AG04449 (cell line): ENCODE measurements at regions of chr1 and their contacts with region 1.

Region 1: DNA sequence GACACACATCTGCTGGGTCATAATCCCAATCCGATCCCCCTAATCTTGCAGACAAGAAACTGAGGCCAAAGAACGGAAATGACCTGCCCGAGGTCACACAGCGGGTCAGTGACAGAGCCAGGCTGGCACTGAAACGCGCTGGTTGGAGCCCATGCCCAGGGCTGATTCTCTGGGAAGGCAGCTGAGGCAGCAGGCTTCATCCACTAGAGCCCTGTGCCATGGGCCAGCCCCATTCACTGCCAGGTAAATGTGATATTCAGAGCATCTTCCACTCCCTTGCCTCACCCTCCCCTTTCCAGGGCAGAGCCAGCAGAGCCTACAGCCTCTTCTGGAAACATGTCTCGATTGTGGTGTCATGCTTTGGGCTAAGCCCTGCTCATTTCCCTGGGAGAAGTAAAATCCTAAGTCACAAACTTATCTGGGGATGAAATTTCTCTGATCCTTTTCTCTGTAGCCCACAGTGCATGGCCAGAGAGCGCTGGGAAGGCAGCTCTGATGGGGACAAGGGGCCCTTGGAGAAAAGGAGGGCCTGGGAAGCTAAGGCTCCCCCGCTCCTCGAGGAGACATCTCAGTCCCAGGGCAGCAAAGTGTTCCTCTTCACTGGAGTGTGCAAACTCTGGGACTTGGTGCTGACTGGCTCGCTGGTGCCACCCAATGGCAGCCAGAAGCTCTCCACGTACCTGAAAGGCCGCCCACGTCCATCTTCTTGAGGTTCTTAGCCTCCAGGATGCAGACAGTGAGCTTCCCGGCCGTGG is 110.4 kb downstream of the SYT2 start:
- DNase-seq: no peak
- H3K4me3 ChIP-seq: no peak overlapping the region
- CTCF ChIP-seq: peak; percentile 95

Region 2: DNA sequence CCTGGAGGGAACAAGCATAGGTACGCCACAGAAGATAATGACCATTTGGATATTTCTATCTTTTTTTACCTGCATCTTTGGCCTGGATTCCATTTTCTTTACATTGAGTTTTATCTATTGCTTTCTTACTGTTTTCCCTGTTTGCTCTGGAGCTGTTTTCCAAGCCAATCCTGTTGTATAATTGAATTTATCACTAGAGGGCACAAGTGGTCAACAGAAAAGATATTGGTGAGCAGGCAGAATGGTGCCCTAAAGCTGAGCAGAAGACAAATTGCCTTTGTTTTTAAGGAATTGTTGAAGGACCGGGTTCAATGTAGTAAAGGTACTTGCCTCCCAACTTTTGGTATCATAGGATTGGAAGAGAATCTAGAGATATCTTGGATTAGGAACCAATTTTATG is 98.6 kb before region 1 on chr1:
- CTCF ChIA-PET with region 1: interaction called, 150 read pairs
- POLR2A ChIA-PET with region 1: no interaction called
- DNase-seq: no peak
- H3K4me3 ChIP-seq: no peak overlapping the region
- CTCF ChIP-seq: peak; percentile 10

Region 3: GRCh38 chr1:202571347-202572339 is 28.2 kb before region 1 on chr1:
- CTCF ChIA-PET with region 1: interaction called, 58 read pairs
- POLR2A ChIA-PET with region 1: no interaction called
- DNase-seq: no peak
- H3K4me3 ChIP-seq: no peak overlapping the region
- CTCF ChIP-seq: peak; percentile 77

Region 4: DNA sequence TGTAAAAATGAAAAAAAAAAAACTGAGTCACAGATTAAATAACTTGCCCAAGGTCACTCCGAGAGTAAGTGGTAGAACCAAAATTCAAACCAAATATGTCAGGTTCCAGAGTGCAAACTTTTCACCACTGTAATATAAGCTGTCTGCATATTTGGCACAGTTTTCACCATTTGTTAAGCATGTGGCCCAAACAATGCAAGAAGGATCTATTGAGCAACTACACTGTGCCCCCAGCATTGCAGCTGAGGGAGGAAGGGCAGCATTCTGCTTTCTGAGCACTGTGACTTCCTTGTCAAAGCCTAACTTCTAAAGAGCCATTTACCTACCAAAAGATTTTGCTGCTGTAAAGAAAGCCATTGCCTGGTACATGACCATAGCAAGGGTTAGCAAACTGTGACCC is 23.0 kb before region 1 on chr1:
- CTCF ChIA-PET with region 1: interaction called, 58 read pairs
- POLR2A ChIA-PET with region 1: no interaction called
- DNase-seq: no peak
- H3K4me3 ChIP-seq: no peak overlapping the region
- CTCF ChIP-seq: no peak

Region 5: DNA sequence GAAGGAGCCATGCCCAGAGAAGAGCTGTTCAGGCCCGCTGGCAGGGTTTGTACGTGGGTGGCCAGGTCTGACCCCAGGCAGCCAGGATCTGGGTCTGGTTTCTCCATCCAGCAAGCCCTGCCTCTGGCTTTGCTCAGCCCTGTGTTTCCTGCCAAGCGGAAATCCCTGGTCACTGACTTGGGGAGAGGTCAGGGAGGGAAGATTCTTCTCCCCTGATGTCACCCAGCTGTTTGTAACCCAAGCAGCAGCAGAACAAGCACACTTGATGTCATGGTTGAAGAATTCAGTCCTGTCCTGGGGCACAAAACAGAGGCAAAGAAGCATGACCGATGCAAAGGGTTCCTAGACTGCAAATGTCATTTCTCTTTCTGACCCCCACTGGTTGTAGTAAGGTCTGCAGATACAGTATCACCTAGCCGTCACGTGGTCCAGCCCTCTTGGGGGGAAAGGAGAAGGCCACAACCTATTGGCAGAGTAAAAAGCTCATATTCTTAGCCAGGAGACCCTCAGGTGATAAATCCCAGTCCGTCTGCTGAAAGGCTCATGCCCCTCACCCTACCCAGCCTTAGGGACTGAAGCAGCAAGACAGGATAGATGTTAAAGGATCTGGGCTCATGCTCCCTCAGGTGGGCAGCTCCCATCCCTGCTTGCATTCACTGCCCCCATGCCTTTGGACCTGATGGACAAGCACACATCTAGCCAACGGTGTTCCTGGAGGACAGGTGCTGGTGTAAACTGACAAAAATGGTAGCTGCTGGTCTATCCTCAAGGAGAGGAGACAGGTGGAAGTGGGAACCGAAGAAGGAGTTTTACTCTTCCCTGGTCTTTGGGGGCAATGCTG is 10.4 kb before region 1 on chr1:
- CTCF ChIA-PET with region 1: interaction called, 82 read pairs
- POLR2A ChIA-PET with region 1: no interaction called
- DNase-seq: peak; percentile 97
- H3K4me3 ChIP-seq: no peak overlapping the region
- CTCF ChIP-seq: no peak

Region 6: DNA sequence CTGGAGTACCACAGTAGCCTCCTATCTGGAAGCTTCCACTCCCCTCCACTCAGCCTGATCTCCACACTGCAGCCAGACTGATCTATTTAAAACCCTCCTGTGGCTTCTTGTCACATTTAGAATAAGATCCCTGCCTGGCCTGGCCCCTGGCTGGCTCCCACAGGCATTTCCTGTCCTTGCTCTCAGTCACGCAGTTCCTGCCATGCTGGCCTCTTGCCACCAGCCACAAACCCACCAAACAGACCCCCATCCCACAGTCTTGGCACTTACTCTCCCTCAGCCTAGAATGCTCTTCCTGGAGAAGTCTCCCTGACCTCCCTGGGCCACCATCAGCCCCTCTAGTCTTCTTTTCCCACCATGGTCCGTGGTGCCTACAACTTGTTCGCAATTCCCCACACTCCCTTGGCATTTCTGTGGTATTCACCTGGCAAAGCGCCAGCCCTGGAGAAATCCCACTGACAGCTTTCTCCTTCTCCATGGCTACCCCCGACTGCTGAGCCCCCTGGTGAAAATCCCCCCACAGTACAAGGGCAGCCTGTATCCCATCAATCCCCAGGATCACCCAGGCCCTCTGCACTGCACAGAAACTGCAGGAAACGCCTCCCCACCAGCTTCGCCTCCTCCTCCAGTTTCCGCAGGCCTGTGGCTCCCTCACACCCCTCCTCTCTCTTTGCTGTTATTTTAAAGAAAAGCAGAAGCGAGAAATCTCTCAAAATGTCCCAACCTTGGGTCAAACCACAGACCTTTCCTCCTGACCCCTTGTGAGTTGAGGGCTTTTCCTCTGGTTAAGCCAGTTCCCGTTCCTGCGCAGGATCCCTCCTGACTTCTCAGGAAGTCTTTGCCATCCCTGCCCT is 15.9 kb after region 1 on chr1:
- CTCF ChIA-PET with region 1: interaction called, 72 read pairs
- POLR2A ChIA-PET with region 1: no interaction called
- DNase-seq: no peak
- H3K4me3 ChIP-seq: no peak overlapping the region
- CTCF ChIP-seq: no peak